ENCODE measurements at regions of chr13 and their contacts with region 1.

Region 1: GRCh38 chr13:43905435-43906031 is 25.8 kb downstream of the LACC1 start:
- DNase-seq: peak; percentile 9
- H3K4me3 Mint-ChIP-seq: no peak overlapping the region
- H3K27ac Mint-ChIP-seq: no peak overlapping the region
- H3K4me1 Mint-ChIP-seq: no peaks in the 10 kb centered on the region
- H3K27me3 Mint-ChIP-seq: peaks cover 16% of the 10 kb centered on the region

Region 2: GRCh38 chr13:43879755-43880181 is 25.8 kb before region 1 on chr13 and contains the start of gene LACC1:
- intact Hi-C with region 1: no loop called
- DNase-seq: no peak
- H3K4me3 Mint-ChIP-seq: peak within 1 kb of the TSS; percentile 84
- H3K27ac Mint-ChIP-seq: peak within 1 kb of the TSS; percentile 81
- H3K4me1 Mint-ChIP-seq: peaks cover 28% of the 10 kb centered on the region
- H3K27me3 Mint-ChIP-seq: peaks cover 17% of the 10 kb centered on the region
- total RNA-seq, gene LACC1: 2.4 and 3.2 TPM in 2 replicates

Region 3: DNA sequence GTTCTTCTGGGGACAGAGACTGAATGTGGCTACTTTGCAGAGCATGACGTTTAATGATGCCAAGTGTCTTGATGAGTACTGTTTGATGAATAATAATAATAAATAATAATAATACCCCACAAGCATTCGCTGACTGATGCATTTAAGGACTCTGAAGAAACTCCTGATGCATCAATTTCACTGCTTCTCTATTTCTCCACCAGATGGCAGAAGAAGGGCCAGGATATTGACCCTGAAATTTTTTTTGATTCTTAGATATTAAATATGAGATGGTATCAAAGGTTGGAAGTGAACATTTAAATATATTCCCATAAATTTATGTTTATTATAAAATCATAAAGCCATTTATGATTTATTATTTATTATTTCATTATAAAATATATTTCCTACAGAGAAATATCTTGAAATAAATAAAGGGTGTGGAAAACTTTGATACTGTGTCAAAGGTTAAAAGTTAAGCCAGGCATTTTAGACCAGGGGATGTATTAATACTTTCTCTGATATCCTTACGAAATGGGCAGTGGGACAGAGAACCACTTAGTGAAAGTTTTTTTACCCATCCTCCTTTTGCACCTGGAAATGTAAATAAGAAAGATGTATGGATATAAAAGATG is 145.0 kb after region 1 on chr13:
- intact Hi-C with region 1: loop called (anchors 2 kb)
- DNase-seq: no peak
- H3K4me3 Mint-ChIP-seq: no peak overlapping the region
- H3K27ac Mint-ChIP-seq: no peak overlapping the region
- H3K4me1 Mint-ChIP-seq: peaks cover 4% of the 10 kb centered on the region
- H3K27me3 Mint-ChIP-seq: peaks cover 11% of the 10 kb centered on the region

Region 4: GRCh38 chr13:44136696-44137268 is 231.2 kb after region 1 on chr13:
- intact Hi-C with region 1: loop called (anchors 2 kb)
- DNase-seq: no peak
- H3K4me3 Mint-ChIP-seq: no peak overlapping the region
- H3K27ac Mint-ChIP-seq: no peak overlapping the region
- H3K4me1 Mint-ChIP-seq: peaks cover 29% of the 10 kb centered on the region
- H3K27me3 Mint-ChIP-seq: peaks cover 32% of the 10 kb centered on the region

Region 5: DNA sequence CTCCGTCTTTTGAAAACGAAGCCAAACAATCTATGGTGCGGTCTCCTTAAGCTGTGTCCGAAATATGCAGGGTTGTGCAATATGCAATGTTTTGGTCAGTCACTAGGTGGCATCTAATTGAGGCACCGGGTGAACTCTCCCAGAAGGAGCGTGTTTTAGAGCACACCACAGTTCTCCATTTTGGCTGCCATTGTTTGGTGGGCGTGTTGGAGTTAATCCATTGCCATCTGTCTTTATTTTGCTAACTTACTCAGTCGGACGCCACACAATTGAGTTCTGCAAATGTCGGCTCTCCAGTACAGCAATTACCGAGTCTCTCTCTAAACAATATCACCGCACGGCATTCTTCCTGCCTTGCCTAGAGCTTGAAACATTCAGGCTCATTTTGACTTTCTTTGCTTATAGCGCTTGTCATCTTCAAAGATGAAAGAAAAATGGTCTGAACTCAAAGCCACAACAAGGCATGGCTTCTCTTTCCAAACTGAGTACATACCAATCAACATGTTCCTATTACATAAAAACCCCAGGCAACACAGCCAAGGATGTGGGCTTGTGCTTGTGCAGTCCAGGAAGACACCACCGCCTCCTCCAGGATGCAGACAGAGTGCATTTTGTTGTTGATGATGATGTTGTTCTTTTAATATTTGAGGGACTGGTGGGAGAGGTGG is 286.1 kb after region 1 on chr13:
- intact Hi-C with region 1: loop called (anchors 10 kb)
- DNase-seq: peak; percentile 17
- H3K4me3 Mint-ChIP-seq: no peak overlapping the region
- H3K27ac Mint-ChIP-seq: no peak overlapping the region
- H3K4me1 Mint-ChIP-seq: peaks cover 35% of the 10 kb centered on the region
- H3K27me3 Mint-ChIP-seq: peaks cover 51% of the 10 kb centered on the region

Region 6: GRCh38 chr13:44243198-44243857 is 337.8 kb after region 1 on chr13:
- intact Hi-C with region 1: loop called (anchors 5 kb)
- DNase-seq: no peak
- H3K4me3 Mint-ChIP-seq: no peak overlapping the region
- H3K27ac Mint-ChIP-seq: no peak overlapping the region
- H3K4me1 Mint-ChIP-seq: peaks cover 8% of the 10 kb centered on the region
- H3K27me3 Mint-ChIP-seq: peaks cover 22% of the 10 kb centered on the region

Region 7: DNA sequence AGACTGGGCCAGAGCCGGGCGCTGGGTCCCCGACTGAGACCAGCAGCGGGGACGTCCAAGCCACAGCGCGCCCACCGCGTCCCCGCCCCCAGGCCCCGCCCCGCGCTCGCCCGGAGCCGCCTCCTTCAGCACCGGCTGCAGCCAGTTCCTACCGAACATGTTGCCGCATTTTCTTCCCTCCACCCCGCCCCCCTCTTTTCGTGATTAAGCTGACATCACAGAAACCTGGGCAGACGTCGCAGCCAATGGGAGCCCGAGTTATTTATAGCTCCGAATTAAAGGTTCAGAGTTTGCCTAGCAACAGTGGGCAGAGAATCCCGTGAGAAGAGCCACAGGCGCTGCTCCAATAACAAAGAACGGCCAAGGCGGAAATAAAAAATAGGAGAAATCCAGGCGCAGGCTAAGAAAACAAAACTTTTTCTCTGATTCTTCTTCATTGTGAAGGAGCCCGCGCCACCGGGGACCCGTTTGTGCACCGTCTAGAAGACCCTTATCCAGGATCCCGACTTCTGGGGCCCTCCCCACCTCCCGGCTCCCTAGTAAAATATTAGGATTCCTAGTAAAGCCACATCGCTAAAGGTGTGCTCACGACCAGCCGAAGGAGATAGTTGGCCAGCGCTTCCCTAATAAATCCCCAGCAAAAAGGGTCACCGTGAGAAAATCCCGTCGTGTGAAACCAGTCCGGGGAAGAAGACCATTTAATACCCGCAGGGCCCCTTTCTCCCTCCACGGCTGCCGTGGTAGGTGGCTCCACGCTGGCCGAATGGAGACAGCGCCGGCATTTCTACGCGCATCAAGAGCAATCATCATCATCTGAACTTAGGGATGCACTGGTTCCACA is 529.8 kb after region 1 on chr13:
- intact Hi-C with region 1: loop called (anchors 1 kb)
- DNase-seq: peak; percentile 70
- H3K4me3 Mint-ChIP-seq: peak overlapping the region; percentile 83
- H3K27ac Mint-ChIP-seq: peak overlapping the region; percentile 72
- H3K4me1 Mint-ChIP-seq: peaks cover 17% of the 10 kb centered on the region
- H3K27me3 Mint-ChIP-seq: peaks cover 47% of the 10 kb centered on the region

Region 8: GRCh38 chr13:44470638-44471562 is 565.4 kb after region 1 on chr13:
- intact Hi-C with region 1: loop called (anchors 1 kb)
- DNase-seq: no peak
- H3K4me3 Mint-ChIP-seq: no peak overlapping the region
- H3K27ac Mint-ChIP-seq: no peak overlapping the region
- H3K4me1 Mint-ChIP-seq: no peaks in the 10 kb centered on the region
- H3K27me3 Mint-ChIP-seq: peaks cover 8% of the 10 kb centered on the region

Measured in activated T-helper 1 cell treated with anti-CD3 and anti-CD28 coated beads, Interleukin-12 subunit alpha, Interleukin-12 subunit beta, Interleukin-2, Interleukin-4 antibody, amounts not matched to agents 30 ng/mL and 10 ng/mL and 1 ng/mL, durations not matched to agents 14 hours and 24 hours and 36 hours (primary cell).